BJ (cell line): ENCODE measurements at regions of chrX and their contacts with region 1.

Region 1: GRCh38 chrX:106894392-106894909 is 8.7 kb downstream of the RIPPLY1 start:
- DNase-seq: no peak
- H3K4me3 ChIP-seq: no peak overlapping the region
- H3K27me3 ChIP-seq: no peaks in the 10 kb centered on the region
- CTCF ChIP-seq: peak; percentile 79

Region 2: GRCh38 chrX:106730401-106730800 is 164.1 kb before region 1 on chrX:
- CTCF ChIA-PET with region 1: no interaction called
- POLR2A ChIA-PET with region 1: no interaction called
- DNase-seq: no peak
- H3K4me3 ChIP-seq: no peak overlapping the region
- H3K27me3 ChIP-seq: no peaks in the 10 kb centered on the region; the same call in 1 of the 2 replicates
- CTCF ChIP-seq: no peak

Region 3: GRCh38 chrX:106906361-106906760 is 11.9 kb after region 1 on chrX:
- CTCF ChIA-PET with region 1: interaction called, 13 read pairs
- POLR2A ChIA-PET with region 1: no interaction called
- DNase-seq: no peak
- H3K4me3 ChIP-seq: no peak overlapping the region
- H3K27me3 ChIP-seq: no peaks in the 10 kb centered on the region
- CTCF ChIP-seq: no peak

Region 4: DNA sequence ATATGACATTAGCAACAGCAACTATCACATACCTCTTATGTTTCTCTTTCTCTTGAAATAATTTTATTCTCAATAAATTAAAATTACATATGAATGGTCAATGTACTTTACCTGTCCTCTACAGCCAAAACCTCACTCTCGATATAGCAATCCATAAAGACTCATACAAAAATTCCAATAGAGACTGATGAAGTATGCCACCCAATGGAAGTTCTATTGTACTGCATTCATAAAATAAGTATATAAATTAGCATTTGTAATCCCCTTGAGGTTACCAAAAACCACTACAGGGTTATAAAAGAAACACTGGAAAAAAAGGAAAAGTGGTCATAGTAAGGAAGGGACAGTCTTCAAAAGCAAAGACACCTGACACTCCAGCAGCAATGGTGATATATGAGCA is 58.5 kb after region 1 on chrX:
- CTCF ChIA-PET with region 1: interaction called, 10 read pairs
- POLR2A ChIA-PET with region 1: no interaction called
- DNase-seq: no peak
- H3K4me3 ChIP-seq: no peak overlapping the region
- H3K27me3 ChIP-seq: no peaks in the 10 kb centered on the region
- CTCF ChIP-seq: peak; percentile 27; the same call in 1 of the 2 replicates

Region 5: DNA sequence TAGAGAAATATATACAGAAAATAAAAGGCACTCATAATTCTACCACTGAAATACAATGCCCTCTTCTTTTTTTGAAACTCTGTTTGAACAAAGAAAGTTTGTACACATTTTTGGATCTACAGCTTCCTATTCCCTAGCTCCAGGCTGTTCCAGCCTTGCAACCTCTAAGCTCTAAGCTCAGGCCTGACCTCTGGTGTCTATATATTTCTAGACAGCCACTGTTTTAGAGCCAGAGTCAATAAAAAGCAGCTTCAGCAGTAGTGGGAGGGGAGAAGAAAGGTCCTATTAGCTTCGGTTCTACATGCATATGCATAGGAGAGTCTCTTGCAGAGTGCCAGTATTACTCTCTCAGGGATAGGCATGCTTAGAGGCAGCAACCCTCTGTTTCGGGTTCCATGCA is 65.5 kb after region 1 on chrX:
- CTCF ChIA-PET with region 1: interaction called, 11 read pairs
- POLR2A ChIA-PET with region 1: no interaction called
- DNase-seq: no peak
- H3K4me3 ChIP-seq: no peak overlapping the region
- H3K27me3 ChIP-seq: no peaks in the 10 kb centered on the region
- CTCF ChIP-seq: peak; percentile 30